ENCODE measurements at regions of chr2 and their contacts with region 1.

Region 1: DNA sequence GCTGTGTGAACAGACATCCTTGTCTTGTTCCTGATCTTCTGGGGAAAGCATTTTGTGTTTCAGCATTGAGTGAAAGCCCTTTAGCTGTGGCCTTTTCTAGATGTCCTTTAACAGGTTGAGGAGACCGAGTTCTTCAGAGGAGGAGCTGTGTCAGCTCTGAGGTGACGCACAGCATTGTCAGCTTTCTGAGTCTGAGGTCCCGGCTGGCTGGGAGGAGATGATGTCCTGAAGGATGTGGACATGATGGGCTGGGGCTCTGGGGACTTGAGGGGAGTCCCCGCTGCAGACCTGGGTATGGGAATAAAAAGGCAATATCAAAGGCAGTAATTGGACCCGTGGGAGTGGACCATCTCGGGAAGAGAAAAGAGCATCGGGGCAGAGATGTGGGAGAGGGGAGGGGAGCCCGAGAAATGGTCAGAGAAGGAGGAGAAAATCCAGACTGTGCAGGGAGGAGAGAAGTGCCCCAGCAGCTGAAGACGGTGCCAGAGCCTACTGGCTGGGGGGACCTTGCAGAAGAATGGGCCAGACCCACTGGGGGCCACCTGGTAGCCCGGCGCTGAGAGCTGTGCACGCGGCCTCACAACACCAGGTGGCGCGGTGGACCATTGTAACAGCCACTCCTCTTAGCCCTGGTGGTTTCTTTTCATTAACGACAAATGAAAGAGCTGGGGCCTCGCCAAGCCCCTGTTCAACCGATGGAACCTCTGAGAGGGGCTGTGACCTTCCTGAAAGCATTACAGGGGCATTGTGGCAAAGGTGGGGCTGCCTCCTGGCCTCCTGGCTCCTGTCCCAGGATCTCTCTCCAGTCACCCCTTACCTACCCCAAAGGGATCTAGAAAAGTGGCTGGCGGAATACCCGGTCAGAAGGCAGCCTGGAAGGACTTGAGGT is 61.6 kb downstream of the ST3GAL5 start:
- DNase-seq: peak; percentile 74 to 88 (median 76)
- H3K4me3 ChIP-seq: no peak overlapping the region
- H3K4me3 Mint-ChIP-seq: peak overlapping the region in 3 of 7 donors; percentile 24 to 47 (median 37)
- H3K27ac ChIP-seq: no peak overlapping the region
- H3K27ac Mint-ChIP-seq: peak overlapping the region in 7 of 8 donors; percentile 51 to 93 (median 74)
- H3K4me1 ChIP-seq: peaks cover 12% of the 10 kb centered on the region
- H3K4me1 Mint-ChIP-seq: peaks cover 21 to 33% (median 29%) of the 10 kb centered on the region in 3 donors
- H3K27me3 ChIP-seq: no peaks in the 10 kb centered on the region
- H3K27me3 Mint-ChIP-seq: peaks cover 2 to 13% of the 10 kb centered on the region in 2 donors

Region 2: GRCh38 chr2:85577386-85578242 is 249.6 kb before region 1 on chr2 and contains the start of gene VAMP8:
- CTCF ChIA-PET with region 1: no interaction called
- POLR2A ChIA-PET with region 1: no interaction called
- DNase-seq: peak; percentile 44 to 76 (median 58)
- H3K4me3 ChIP-seq: peak within 1 kb of the TSS; percentile 78
- H3K4me3 Mint-ChIP-seq: peak within 1 kb of the TSS; percentile 86 to 98 (median 97)
- H3K27ac ChIP-seq: peak within 1 kb of the TSS; percentile 73
- H3K27ac Mint-ChIP-seq: peak within 1 kb of the TSS; percentile 84 to 99 (median 94)
- H3K4me1 ChIP-seq: peaks cover 34% of the 10 kb centered on the region
- H3K4me1 Mint-ChIP-seq: peaks cover 33 to 46% (median 38%) of the 10 kb centered on the region in 3 donors
- H3K27me3 ChIP-seq: no peaks in the 10 kb centered on the region
- H3K27me3 Mint-ChIP-seq: no peaks in the 10 kb centered on the region
- total RNA-seq, gene VAMP8: 94.4 to 95.4 TPM

Region 3: DNA sequence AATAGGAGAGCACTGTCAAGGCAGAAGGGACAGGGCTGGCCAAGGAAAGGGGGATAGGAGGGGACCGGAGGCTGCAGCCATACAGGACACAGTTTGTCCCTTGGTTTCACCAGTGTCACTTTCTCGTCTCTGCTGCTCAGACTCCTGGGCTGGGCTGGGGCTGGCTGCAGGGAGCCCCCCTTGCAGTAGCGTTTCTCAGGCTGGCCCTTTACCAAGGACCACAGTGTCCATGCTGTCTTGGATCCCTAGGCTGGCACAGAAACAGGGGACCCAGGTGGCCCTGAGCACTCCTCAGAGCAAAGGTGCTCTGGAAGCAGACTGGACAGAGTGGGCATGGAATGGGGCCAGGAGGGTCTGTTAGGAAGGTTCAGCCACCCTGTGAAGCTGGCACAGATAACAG is 38.6 kb before region 1 on chr2:
- CTCF ChIA-PET with region 1: no interaction called
- POLR2A ChIA-PET with region 1: no interaction called
- DNase-seq: peak in 1 of 5 donors; percentile 10
- H3K4me3 ChIP-seq: no peak overlapping the region
- H3K4me3 Mint-ChIP-seq: no peak overlapping the region
- H3K27ac ChIP-seq: no peak overlapping the region
- H3K27ac Mint-ChIP-seq: no peak overlapping the region
- H3K4me1 ChIP-seq: no peaks in the 10 kb centered on the region
- H3K4me1 Mint-ChIP-seq: peaks cover 0 to 3% (median 2%) of the 10 kb centered on the region in 3 donors
- H3K27me3 ChIP-seq: no peaks in the 10 kb centered on the region
- H3K27me3 Mint-ChIP-seq: peaks cover 6 to 29% of the 10 kb centered on the region in 2 donors

Region 4: GRCh38 chr2:85813982-85814801 is 13.0 kb before region 1 on chr2:
- CTCF ChIA-PET with region 1: interaction called, 22 read pairs
- POLR2A ChIA-PET with region 1: no interaction called
- DNase-seq: peak; percentile 62 to 82 (median 75)
- H3K4me3 ChIP-seq: no peak overlapping the region
- H3K4me3 Mint-ChIP-seq: peak overlapping the region in 1 of 7 donors; percentile 1
- H3K27ac ChIP-seq: no peak overlapping the region
- H3K27ac Mint-ChIP-seq: peak overlapping the region in 1 of 8 donors; percentile 61
- H3K4me1 ChIP-seq: no peaks in the 10 kb centered on the region
- H3K4me1 Mint-ChIP-seq: peaks cover 0 to 3% (median 0%) of the 10 kb centered on the region in 3 donors
- H3K27me3 ChIP-seq: no peaks in the 10 kb centered on the region
- H3K27me3 Mint-ChIP-seq: peaks cover 14 to 27% of the 10 kb centered on the region in 2 donors

Region 5: DNA sequence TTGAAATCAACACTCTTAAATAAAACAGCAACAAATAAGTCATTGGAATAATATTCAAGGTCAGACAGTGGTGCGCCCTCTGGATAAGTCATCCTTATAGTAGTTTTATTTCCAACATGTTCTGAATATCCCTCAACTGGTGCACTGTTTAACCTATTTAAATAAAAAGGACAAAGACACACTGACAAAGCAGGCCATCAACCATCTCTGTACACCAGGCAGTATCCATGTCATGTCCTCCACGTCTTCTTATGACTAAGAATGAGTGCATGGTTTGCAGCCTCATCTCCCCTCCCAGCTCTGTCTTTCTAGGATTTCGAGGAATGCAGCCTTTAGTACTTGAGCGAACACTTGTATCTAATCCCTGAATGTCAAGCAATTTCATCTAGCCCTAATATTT is 19.2 kb after region 1 on chr2:
- CTCF ChIA-PET with region 1: interaction called, 34 read pairs
- POLR2A ChIA-PET with region 1: no interaction called
- DNase-seq: no peak
- H3K4me3 ChIP-seq: no peak overlapping the region
- H3K4me3 Mint-ChIP-seq: no peak overlapping the region
- H3K27ac ChIP-seq: no peak overlapping the region
- H3K27ac Mint-ChIP-seq: peak overlapping the region; percentile 24 to 88 (median 78)
- H3K4me1 ChIP-seq: peaks cover 19% of the 10 kb centered on the region
- H3K4me1 Mint-ChIP-seq: peaks cover 34 to 74% (median 57%) of the 10 kb centered on the region in 3 donors
- H3K27me3 ChIP-seq: no peaks in the 10 kb centered on the region
- H3K27me3 Mint-ChIP-seq: peaks cover 0 to 1% of the 10 kb centered on the region in 2 donors

Region 6: GRCh38 chr2:85858841-85859240 is 31.6 kb after region 1 on chr2:
- CTCF ChIA-PET with region 1: interaction called, 34 read pairs
- POLR2A ChIA-PET with region 1: no interaction called
- DNase-seq: no peak
- H3K4me3 ChIP-seq: no peak overlapping the region
- H3K4me3 Mint-ChIP-seq: peak overlapping the region in 1 of 7 donors; percentile 16
- H3K27ac ChIP-seq: no peak overlapping the region
- H3K27ac Mint-ChIP-seq: peak overlapping the region in 7 of 8 donors; percentile 23 to 99 (median 78)
- H3K4me1 ChIP-seq: peaks cover 41% of the 10 kb centered on the region
- H3K4me1 Mint-ChIP-seq: peaks cover 51 to 83% (median 66%) of the 10 kb centered on the region in 3 donors
- H3K27me3 ChIP-seq: no peaks in the 10 kb centered on the region
- H3K27me3 Mint-ChIP-seq: no peaks in the 10 kb centered on the region

Region 7: DNA sequence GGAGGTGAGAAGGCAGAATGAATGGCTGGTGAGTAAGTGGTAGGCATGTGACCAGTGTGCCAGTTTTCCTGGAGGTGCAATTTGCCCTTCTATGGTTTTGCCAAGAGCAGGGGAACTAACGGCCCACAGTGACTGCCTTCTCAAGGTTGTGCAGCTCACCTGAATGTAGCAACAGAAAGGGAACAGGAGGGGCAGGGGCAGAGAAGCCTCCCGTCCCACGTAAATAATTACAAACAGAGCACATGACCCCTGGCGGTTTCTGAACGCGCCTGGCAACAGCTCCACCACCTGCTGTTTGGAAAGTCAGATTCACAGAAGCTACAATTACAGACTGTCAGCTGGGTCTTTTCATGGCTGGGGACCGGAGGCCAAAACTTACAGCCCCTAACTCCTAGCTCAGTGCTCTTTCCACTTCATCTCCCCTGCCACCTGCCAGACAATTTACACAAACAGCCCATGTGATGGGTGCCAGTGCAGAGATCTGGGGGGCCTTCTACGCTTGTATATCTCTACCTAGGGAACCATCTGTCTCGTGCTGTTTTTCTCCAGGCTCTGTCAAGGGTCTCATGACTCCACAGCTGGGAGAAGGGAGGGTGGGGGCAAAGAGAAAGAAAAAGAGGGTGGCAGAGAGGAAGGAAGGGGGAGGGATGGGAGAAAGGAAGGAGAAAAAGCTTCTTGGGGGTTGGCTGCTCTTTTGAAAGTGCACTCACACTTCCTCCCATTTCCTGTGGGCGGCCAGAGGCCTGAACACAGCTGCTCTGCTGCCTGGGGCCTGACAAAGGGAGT is 208.8 kb after region 1 on chr2:
- CTCF ChIA-PET with region 1: interaction called, 63 read pairs
- POLR2A ChIA-PET with region 1: interaction called, 8 read pairs
- DNase-seq: peak; percentile 47 to 85 (median 78)
- H3K4me3 ChIP-seq: peak overlapping the region; percentile 53
- H3K4me3 Mint-ChIP-seq: peak overlapping the region; percentile 68 to 96 (median 85)
- H3K27ac ChIP-seq: peak overlapping the region; percentile 78
- H3K27ac Mint-ChIP-seq: peak overlapping the region; percentile 97 to 100 (median 100)
- H3K4me1 ChIP-seq: peaks cover 84% of the 10 kb centered on the region
- H3K4me1 Mint-ChIP-seq: peaks cover 76 to 79% (median 78%) of the 10 kb centered on the region in 3 donors
- H3K27me3 ChIP-seq: no peaks in the 10 kb centered on the region
- H3K27me3 Mint-ChIP-seq: peaks cover 0 to 6% of the 10 kb centered on the region in 2 donors

Region 8: GRCh38 chr2:86079981-86080911 is 253.0 kb after region 1 on chr2:
- CTCF ChIA-PET with region 1: interaction called, 196 read pairs
- POLR2A ChIA-PET with region 1: interaction called, 25 read pairs
- DNase-seq: peak; percentile 71 to 89 (median 79)
- H3K4me3 ChIP-seq: no peak overlapping the region
- H3K4me3 Mint-ChIP-seq: peak overlapping the region; percentile 21 to 82 (median 69)
- H3K27ac ChIP-seq: peak overlapping the region; percentile 64
- H3K27ac Mint-ChIP-seq: peak overlapping the region; percentile 96 to 99 (median 97)
- H3K4me1 ChIP-seq: peaks cover 22% of the 10 kb centered on the region
- H3K4me1 Mint-ChIP-seq: peaks cover 29 to 35% (median 32%) of the 10 kb centered on the region in 3 donors
- H3K27me3 ChIP-seq: no peaks in the 10 kb centered on the region
- H3K27me3 Mint-ChIP-seq: peaks cover 0 to 6% of the 10 kb centered on the region in 2 donors

Measured in CD8-positive, alpha-beta memory T cell (primary cell).